ENCODE measurements at regions of chr12 and their contacts with region 1.

Region 1: GRCh38 chr12:56029666-56030293 is 8.9 kb downstream of the IKZF4 start:
- DNase-seq: peak in 6 of 9 experiments; percentile 40 to 67 (median 53)
- ATAC-seq: peak; percentile 41
- H3K4me3 ChIP-seq: no peak overlapping the region
- H3K4me3 Mint-ChIP-seq: no peak overlapping the region
- H3K27ac ChIP-seq: no peak overlapping the region
- H3K27ac Mint-ChIP-seq: peak overlapping the region; percentile 73
- H3K4me1 ChIP-seq: peaks cover 23% of the 10 kb centered on the region
- H3K4me1 Mint-ChIP-seq: peaks cover 26% of the 10 kb centered on the region
- H3K27me3 ChIP-seq: no peaks in the 10 kb centered on the region
- H3K27me3 Mint-ChIP-seq: no peaks in the 10 kb centered on the region
- CTCF ChIP-seq: peak; percentile 63

Region 2: GRCh38 chr12:55728939-55729823 is 300.6 kb before region 1 on chr12 and contains the start of gene CD63:
- CTCF ChIA-PET with region 1: no interaction called
- POLR2A ChIA-PET with region 1: no interaction called
- intact Hi-C with region 1: loop called in 1 of 2 experiments (anchors 2 kb)
- DNase-seq: peak in 8 of 9 experiments; percentile 42 to 76 (median 61)
- ATAC-seq: peak; percentile 56
- H3K4me3 ChIP-seq: peak within 1 kb of the TSS; percentile 60 to 68
- H3K4me3 Mint-ChIP-seq: peak within 1 kb of the TSS; percentile 86
- H3K27ac ChIP-seq: peak within 1 kb of the TSS; percentile 45 to 83
- H3K27ac Mint-ChIP-seq: peak within 1 kb of the TSS; percentile 90
- H3K4me1 ChIP-seq: peaks cover 31% of the 10 kb centered on the region
- H3K4me1 Mint-ChIP-seq: peaks cover 48% of the 10 kb centered on the region
- H3K27me3 ChIP-seq: no peaks in the 10 kb centered on the region
- H3K27me3 Mint-ChIP-seq: no peaks in the 10 kb centered on the region
- CTCF ChIP-seq: no peak
- total RNA-seq, gene CD63: 27.0 to 33.8 TPM

Region 3: DNA sequence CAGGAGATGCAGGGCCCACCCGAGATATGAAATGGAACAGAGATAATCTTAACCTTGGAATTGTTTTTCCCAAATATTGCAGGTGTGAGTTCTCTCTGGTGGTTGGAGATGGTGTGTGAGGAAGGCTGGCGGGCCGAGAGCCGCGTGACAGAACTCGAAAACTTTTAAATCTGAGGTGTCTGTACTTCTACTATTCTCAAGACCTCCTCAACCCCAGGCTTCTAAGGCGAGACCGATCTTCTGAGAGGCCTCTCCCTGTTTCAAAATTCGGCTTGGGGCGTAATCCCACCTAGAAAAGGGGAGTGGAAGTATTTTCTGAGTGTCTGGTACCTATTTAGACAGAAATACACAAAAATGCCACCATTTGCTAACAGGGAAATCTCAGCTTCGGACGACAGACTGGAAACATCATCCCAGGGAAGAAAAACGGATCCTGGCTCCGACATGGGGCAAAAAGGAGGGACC is 212.9 kb before region 1 on chr12:
- CTCF ChIA-PET with region 1: no interaction called
- POLR2A ChIA-PET with region 1: no interaction called
- intact Hi-C with region 1: no loop called
- DNase-seq: no peak
- ATAC-seq: no peak
- H3K4me3 ChIP-seq: peak overlapping the region; percentile 81 to 89
- H3K4me3 Mint-ChIP-seq: no peak overlapping the region
- H3K27ac ChIP-seq: peak overlapping the region; percentile 81 to 89
- H3K27ac Mint-ChIP-seq: no peak overlapping the region
- H3K4me1 ChIP-seq: peaks cover 38% of the 10 kb centered on the region
- H3K4me1 Mint-ChIP-seq: peaks cover 51% of the 10 kb centered on the region
- H3K27me3 ChIP-seq: no peaks in the 10 kb centered on the region
- H3K27me3 Mint-ChIP-seq: no peaks in the 10 kb centered on the region
- CTCF ChIP-seq: no peak

Measured in CD8-positive, alpha-beta T cell (primary cell).